ENCODE measurements at regions of chr9 and their contacts with region 1.

Region 1: DNA sequence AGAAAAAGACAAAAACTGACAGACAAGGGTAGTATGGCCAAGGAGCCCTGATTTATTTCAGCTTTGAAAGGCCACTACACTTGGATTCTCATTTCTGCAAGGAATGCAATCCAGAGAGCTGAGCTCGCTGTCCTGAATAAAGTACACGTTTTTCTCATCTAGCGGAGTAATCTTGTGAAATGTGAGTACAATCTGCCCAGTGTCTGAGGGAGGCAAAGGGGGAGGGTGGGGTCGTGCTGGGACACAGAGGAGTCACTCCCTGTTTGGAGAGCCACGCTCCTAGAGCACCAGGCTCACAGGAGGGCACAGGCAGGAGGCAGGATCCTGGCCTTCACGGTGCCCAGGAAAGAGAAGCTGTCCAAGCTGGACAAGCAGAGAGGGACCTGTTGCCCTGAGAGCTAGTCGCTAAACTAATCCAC is 51.0 kb upstream of the IFNK start:
- DNase-seq: peak in 3 of 5 donors; percentile 37 to 67 (median 42)
- H3K4me3 ChIP-seq: no peak overlapping the region
- H3K27ac ChIP-seq: peak overlapping the region; percentile 67 to 68
- H3K4me1 ChIP-seq: peaks cover 55% of the 10 kb centered on the region
- H3K27me3 ChIP-seq: no peaks in the 10 kb centered on the region
- CTCF ChIP-seq: no peak
- EP300 ChIP-seq: no peak
- POLR2A ChIP-seq: no peak

Region 2: DNA sequence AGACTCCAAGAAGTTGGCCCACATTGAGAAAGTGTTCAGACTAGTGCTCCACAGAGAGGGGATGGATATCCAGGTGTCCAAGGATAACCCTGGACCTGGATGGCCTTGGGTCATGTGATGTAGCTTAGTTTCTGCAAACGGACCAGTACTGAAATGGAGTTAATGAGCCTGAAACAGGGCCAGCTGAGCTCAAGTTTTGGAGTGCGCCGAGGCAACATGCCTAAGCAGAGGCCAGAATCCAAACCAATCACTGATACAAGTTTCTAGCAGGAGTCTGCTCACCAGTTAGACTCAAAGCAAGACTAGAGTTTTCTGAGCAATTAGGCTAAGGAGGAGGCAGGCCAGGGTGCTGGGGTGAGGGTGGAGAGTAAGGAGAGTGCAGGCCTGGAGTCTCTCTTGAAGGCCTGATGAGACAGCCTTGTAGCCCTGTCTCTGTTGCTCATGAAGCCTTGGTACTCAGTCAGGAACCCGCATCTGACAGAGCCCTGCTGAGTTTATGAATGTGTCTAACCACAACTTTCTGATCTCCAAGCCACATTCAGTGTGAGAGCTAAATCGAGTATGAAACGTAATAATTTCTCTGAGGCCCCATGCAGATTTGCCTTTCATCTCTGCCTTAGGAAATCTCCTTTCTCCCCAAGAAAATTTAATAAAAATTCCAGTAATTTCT is 107.3 kb before region 1 on chr9:
- intact Hi-C with region 1: loop called in 1 of 4 experiments (anchors 10 kb)
- DNase-seq: peak in 1 of 5 donors; percentile 34
- H3K4me3 ChIP-seq: no peak overlapping the region
- H3K27ac ChIP-seq: peak overlapping the region; percentile 71 to 84
- H3K4me1 ChIP-seq: peaks cover 38% of the 10 kb centered on the region
- H3K27me3 ChIP-seq: no peaks in the 10 kb centered on the region
- CTCF ChIP-seq: no peak
- EP300 ChIP-seq: no peak
- POLR2A ChIP-seq: no peak